SK-N-SH (cell line): ENCODE measurements at regions of chr1 and their contacts with region 1.

Region 1: DNA sequence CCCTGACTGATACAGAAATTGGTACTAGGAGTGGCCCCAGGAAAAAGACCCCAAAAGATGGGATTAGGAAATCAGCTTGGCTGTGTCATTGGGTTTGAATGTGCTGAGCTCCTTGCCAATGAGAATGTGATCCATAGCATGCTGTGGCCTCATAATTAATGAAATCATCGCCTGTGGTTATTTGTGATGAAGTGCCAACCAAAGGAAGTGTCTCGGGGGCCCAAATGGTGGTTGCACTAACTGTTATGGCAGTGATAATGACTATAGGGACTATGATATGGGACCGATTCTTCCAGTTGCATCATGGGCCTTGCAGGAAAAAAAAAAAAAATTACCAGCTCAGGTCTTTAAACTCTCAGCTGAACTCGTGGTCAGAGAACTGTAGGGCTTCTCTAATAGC is 15.4 kb upstream of the ZDHHC18 start:
- DNase-seq: no peak
- H3K4me3 ChIP-seq: no peak overlapping the region
- H3K27ac ChIP-seq: no peak overlapping the region
- H3K4me1 ChIP-seq: no peaks in the 10 kb centered on the region
- H3K27me3 ChIP-seq: no peaks in the 10 kb centered on the region
- CTCF ChIP-seq: no peak
- EP300 ChIP-seq: no peak
- RAD21 ChIP-seq: no peak

Region 2: GRCh38 chr1:26794391-26794790 is 16.7 kb before region 1 on chr1:
- CTCF ChIA-PET with region 1: interaction called, 36 read pairs
- POLR2A ChIA-PET with region 1: no interaction called
- DNase-seq: no peak
- H3K4me3 ChIP-seq: no peak overlapping the region
- H3K27ac ChIP-seq: no peak overlapping the region
- H3K4me1 ChIP-seq: peaks cover 0 to 5% of the 10 kb centered on the region in 2 experiments; a peak in 2 of 4 replicates
- H3K27me3 ChIP-seq: no peaks in the 10 kb centered on the region
- CTCF ChIP-seq: no peak
- EP300 ChIP-seq: no peak
- RAD21 ChIP-seq: no peak

Region 3: DNA sequence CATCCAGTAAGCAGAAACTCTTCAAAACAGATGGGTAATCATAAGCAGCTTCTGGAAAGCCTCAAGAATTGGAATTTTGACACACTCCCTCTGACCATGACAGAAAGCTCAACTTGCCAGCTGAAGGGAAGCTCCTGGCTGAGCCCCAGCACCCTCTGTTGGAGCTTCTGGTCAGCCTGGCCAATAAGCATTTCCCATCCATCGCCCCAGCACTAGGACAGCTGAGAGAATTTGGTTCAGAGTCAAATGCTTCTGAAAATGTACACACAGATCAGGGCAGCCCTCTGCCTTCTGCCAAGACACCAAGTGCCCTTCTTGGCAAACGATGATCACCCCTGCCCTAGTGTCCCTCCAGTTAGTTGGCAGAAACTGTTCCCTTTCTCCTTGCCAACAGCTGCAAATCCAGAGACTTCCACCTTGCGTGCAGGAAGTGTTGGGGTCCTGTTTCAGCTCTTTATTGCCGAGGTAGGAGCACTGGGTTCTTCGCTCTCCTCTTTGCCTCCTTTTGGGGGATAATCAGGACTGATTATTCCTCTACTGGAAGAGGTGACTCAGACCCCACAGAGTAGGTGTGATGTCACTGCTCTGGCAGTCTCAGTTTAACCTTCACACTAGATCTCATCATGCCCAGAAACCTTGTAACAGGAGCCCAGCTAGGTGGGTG is 11.4 kb before region 1 on chr1:
- CTCF ChIA-PET with region 1: interaction called, 36 read pairs
- POLR2A ChIA-PET with region 1: no interaction called
- DNase-seq: peak; percentile 32
- H3K4me3 ChIP-seq: peak overlapping the region; percentile 4 to 9; a peak in 1 of 4 replicates
- H3K27ac ChIP-seq: peak overlapping the region; percentile 29 to 68
- H3K4me1 ChIP-seq: peaks cover 11 to 13% of the 10 kb centered on the region in 2 experiments
- H3K27me3 ChIP-seq: no peaks in the 10 kb centered on the region
- CTCF ChIP-seq: no peak
- EP300 ChIP-seq: peak in 1 of 2 experiments; percentile 42; a peak in 1 of 4 replicates
- RAD21 ChIP-seq: no peak

Region 4: GRCh38 chr1:26822737-26823395 is 11.8 kb after region 1 on chr1:
- CTCF ChIA-PET with region 1: interaction called, 13 read pairs
- POLR2A ChIA-PET with region 1: no interaction called
- DNase-seq: no peak
- H3K4me3 ChIP-seq: no peak overlapping the region
- H3K27ac ChIP-seq: no peak overlapping the region
- H3K4me1 ChIP-seq: peaks cover 6 to 10% of the 10 kb centered on the region in 2 experiments; a peak in 2 of 4 replicates
- H3K27me3 ChIP-seq: no peaks in the 10 kb centered on the region
- CTCF ChIP-seq: no peak
- EP300 ChIP-seq: no peak
- RAD21 ChIP-seq: no peak